ENCODE measurements at regions of chr1 and their contacts with region 1.

Region 1: GRCh38 chr1:175146529-175147213 is 45.9 kb downstream of the KIAA0040 start:
- DNase-seq: peak; percentile 82
- CTCF ChIP-seq: peak; percentile 95

Region 2: DNA sequence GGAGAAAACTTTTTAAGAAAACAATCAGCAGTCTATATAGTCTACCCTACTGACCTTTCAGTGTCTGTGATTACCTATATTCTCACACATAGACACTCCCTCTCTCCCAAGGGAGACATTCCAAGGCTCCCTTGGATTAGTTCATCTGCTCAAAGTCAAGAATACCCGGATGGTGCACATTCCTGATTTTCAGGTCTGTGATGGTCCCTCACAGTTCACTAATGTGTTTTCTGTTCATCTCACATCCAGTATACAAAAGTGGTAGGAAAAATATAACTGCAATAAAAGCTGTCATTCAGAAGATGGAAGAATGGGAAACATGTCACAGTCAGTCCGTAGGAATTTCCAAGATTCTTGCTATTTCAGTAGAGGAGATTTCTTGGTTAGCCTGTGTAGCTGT is 371.1 kb before region 1 on chr1:
- CTCF ChIA-PET with region 1: no interaction called
- POLR2A ChIA-PET with region 1: no interaction called
- DNase-seq: no peak
- CTCF ChIP-seq: no peak

Region 3: GRCh38 chr1:174916846-174917245 is 229.8 kb before region 1 on chr1:
- CTCF ChIA-PET with region 1: no interaction called
- POLR2A ChIA-PET with region 1: no interaction called
- DNase-seq: no peak
- CTCF ChIP-seq: no peak

Region 4: DNA sequence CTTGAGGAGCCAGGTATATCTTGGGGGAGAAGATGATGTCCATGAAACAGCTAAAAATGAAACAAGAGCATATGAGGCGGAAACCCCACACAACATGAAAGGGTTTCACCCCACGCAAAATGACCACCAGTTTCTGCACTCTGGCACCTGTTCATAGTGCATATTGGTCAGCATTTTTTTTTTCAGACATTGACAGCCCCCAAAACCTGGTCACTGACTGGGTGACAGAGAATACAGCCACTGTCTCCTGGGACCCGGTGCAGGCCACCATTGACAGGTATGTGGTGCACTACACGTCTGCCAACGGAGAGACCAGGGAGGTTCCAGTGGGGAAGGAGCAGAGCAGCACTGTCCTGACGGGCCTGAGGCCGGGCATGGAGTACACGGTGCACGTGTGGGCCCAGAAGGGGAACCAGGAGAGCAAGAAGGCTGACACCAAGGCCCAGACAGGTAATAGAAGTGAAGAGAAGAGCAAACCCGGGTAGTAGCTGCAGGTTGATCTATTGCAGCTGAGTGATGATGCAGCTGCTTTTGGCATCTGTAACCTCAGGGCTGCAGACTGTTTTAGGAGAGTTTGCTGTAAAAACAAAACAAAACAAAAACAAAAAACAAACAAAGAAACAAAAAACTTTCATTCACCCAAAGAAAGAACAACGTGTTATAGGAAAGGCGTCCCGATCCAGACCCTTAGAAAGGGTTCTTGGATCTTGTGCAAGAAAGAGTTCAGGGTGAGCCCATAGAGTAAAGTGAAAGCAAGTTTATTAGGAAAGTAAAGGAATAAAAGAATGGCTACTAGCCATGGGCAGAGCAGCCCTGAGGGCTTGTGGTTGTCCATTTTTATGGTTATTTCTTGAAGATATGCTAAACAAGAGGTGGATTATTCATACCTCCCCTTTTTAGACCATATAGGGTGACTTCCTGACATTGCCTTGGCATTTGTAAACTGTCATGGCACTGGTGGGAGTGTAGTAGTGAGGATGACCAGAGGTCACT is 28.0 kb before region 1 on chr1:
- CTCF ChIA-PET with region 1: interaction called, 32 read pairs
- POLR2A ChIA-PET with region 1: no interaction called
- DNase-seq: no peak
- CTCF ChIP-seq: no peak

Region 5: GRCh38 chr1:175162955-175163354 is 16.3 kb after region 1 on chr1:
- CTCF ChIA-PET with region 1: interaction called, 37 read pairs
- POLR2A ChIA-PET with region 1: no interaction called
- DNase-seq: no peak
- CTCF ChIP-seq: no peak

Region 6: DNA sequence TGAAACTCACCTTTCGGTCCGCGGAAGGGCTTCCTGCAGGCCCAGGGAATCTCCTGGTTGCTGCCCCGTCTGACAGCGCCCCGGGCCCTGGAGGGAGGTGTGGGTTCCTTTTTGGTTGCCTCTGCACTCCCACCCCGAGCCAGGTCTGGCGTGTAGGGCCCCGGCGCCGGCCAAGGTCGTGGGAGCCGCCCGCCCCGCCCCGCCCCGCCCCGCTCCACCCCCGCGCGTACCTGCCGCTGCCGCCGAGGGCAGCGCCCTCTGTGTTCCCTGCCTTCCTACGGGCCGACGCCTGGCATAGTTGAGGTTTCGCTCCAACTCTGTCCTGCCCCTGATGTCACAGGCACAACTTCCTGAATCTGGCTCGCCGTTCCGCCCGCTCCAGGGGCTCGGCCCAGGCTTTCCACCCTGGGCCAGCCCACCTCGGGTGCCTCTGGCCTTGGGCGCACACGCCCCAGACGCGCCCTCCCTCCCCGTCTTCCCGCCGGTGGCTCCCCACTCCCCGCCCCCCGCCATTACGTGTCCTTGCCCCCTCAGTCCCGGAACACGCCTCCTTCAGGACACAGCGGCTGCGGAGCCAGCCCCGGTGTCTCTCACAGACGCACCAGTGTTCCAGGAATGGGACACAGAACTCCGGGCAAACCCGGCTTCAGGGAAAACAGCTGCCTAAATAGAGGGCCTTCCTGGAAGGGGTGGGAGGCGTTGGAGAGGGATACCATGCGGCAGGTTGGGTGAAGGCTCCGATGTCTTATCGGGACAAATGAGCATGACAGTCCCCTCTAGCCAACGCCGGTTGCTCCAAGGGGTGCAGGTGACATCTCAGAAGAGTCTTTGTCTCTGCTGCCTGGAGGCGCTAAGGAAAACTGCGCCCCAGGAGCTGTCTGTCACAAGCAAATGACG is 46.2 kb after region 1 on chr1 and contains the start of gene KIAA0040:
- CTCF ChIA-PET with region 1: interaction called, 58 read pairs
- POLR2A ChIA-PET with region 1: no interaction called
- DNase-seq: peak; percentile 77
- CTCF ChIP-seq: peak; percentile 46

Region 7: GRCh38 chr1:175978476-175978875 is 831.8 kb after region 1 on chr1:
- CTCF ChIA-PET with region 1: no interaction called
- POLR2A ChIA-PET with region 1: no interaction called
- DNase-seq: no peak
- CTCF ChIP-seq: no peak

Measured in GM10248 (cell line).